ENCODE measurements at regions of chr19 and their contacts with region 1.

Region 1: GRCh38 chr19:44839276-44839675 is 6.8 kb upstream of the NECTIN2 start:
- DNase-seq: no peak

Region 2: GRCh38 chr19:44789943-44790483 is 49.3 kb before region 1 on chr19:
- intact Hi-C with region 1: loop called in 1 of 2 experiments (anchors 1 kb)
- DNase-seq: no peak